ENCODE measurements at regions of chr14 and their contacts with region 1.

Region 1: DNA sequence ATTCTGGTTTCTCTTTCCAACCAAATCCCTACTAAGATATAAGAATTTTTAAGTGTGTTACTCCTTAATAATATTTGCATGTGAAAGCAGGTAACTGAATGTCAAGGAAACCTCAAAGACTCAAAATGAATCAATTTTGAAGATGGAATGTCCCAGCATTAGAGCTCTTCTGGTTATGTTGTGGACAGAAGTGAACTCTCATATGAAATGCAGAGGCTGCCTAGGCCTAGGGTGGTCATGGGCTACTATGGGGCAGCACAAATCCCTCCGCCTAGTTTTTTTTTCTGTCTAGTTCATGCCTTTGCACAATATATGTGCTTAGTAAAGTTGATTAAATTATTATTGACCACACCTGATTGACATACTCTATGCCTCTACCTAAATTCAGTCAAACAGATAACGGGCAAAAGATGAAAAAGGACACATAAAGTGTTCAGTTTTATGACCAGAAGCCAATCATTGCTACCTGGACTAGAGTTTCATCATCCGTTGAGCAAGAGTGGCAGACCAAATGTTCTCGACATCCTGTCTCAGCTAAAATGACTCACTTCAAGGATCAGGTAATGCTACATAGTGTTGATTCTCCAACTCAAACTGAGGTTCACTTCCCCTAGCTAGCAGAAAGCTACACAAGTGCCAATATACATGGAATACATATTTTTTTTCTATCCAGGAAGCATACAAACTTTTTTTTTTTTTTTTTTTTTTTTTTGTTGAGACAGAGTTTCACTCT is 1211.4 kb downstream of the VRK1 start:
- DNase-seq: no peak
- H3K4me3 ChIP-seq: no peak overlapping the region
- H3K4me3 Mint-ChIP-seq: no peak overlapping the region
- H3K27ac ChIP-seq: no peak overlapping the region
- H3K27ac Mint-ChIP-seq: peak overlapping the region in 1 of 8 donors; percentile 26
- H3K4me1 ChIP-seq: peaks cover 9% of the 10 kb centered on the region
- H3K4me1 Mint-ChIP-seq: peaks cover 7 to 26% (median 17%) of the 10 kb centered on the region in 3 donors
- H3K27me3 ChIP-seq: no peaks in the 10 kb centered on the region
- H3K27me3 Mint-ChIP-seq: peaks cover 0 to 2% of the 10 kb centered on the region in 2 donors

Region 2: DNA sequence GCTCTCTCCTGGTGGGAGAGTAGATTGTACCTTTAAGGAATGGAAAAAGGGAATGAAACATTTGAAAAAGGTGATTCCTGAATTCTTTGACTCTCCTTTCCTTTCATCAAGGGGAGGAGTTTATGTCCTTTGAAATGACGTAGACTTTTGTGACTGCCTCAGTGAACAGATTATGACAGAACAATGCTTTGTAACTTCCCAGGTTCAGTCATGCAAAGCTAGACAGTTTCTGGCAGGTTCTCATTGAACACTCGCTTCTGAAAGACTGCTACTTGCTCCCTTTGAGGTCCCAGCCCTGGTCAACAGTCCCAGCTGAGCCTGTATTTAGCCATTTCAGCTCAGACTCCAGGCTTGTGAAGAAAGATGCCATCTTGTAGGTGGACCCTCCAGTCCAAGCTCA is 84.5 kb after region 1 on chr14:
- CTCF ChIA-PET with region 1: no interaction called
- POLR2A ChIA-PET with region 1: no interaction called
- DNase-seq: no peak
- H3K4me3 ChIP-seq: no peak overlapping the region
- H3K4me3 Mint-ChIP-seq: no peak overlapping the region
- H3K27ac ChIP-seq: no peak overlapping the region
- H3K27ac Mint-ChIP-seq: no peak overlapping the region
- H3K4me1 ChIP-seq: no peaks in the 10 kb centered on the region
- H3K4me1 Mint-ChIP-seq: no peaks in the 10 kb centered on the region
- H3K27me3 ChIP-seq: no peaks in the 10 kb centered on the region
- H3K27me3 Mint-ChIP-seq: peaks cover 3% of the 10 kb centered on the region in 2 donors

Region 3: DNA sequence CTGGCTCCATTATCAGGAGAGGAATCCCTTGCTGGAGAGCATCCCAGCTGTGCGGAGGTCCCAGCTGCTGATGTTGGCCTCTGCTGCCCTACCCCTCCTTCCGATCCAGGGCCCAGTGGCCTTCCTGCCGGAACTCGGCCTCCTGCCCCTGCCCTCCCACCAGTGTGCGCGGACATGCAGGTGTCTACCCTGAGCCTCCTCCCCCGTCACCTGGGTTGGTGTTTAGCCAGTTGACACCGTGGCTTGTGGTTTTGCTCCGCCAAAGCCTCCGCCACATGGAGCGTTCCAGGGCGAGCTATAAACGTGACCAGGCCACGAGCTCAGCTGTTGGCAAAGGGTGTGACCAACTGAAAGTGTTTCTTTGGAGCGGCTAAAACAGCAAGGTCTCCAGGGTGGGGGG is 159.2 kb after region 1 on chr14:
- CTCF ChIA-PET with region 1: no interaction called
- POLR2A ChIA-PET with region 1: interaction called, 12 read pairs
- DNase-seq: peak in 4 of 5 donors; percentile 6 to 54 (median 35)
- H3K4me3 ChIP-seq: peak overlapping the region; percentile 35
- H3K4me3 Mint-ChIP-seq: peak overlapping the region in 6 of 7 donors; percentile 56 to 71 (median 66)
- H3K27ac ChIP-seq: no peak overlapping the region
- H3K27ac Mint-ChIP-seq: peak overlapping the region; percentile 15 to 98 (median 90)
- H3K4me1 ChIP-seq: peaks cover 84% of the 10 kb centered on the region
- H3K4me1 Mint-ChIP-seq: peaks cover 79 to 92% (median 91%) of the 10 kb centered on the region in 3 donors
- H3K27me3 ChIP-seq: no peaks in the 10 kb centered on the region
- H3K27me3 Mint-ChIP-seq: peaks cover 0 to 4% of the 10 kb centered on the region in 2 donors

Region 4: GRCh38 chr14:99296517-99296916 is 1288.0 kb after region 1 on chr14:
- CTCF ChIA-PET with region 1: no interaction called
- POLR2A ChIA-PET with region 1: no interaction called
- DNase-seq: no peak
- H3K4me3 ChIP-seq: no peak overlapping the region
- H3K4me3 Mint-ChIP-seq: no peak overlapping the region
- H3K27ac ChIP-seq: no peak overlapping the region
- H3K27ac Mint-ChIP-seq: peak overlapping the region in 1 of 8 donors; percentile 84
- H3K4me1 ChIP-seq: no peaks in the 10 kb centered on the region
- H3K4me1 Mint-ChIP-seq: peaks cover 0 to 2% (median 0%) of the 10 kb centered on the region in 3 donors
- H3K27me3 ChIP-seq: no peaks in the 10 kb centered on the region
- H3K27me3 Mint-ChIP-seq: peaks cover 8 to 23% of the 10 kb centered on the region in 2 donors